ENCODE measurements at regions of chr1 and their contacts with region 1.

Region 1: GRCh38 chr1:205812878-205813754 is at the start of gene SLC41A1:
- DNase-seq: peak; percentile 89 to 97
- H3K4me3 ChIP-seq: peak within 1 kb of the TSS; percentile 94
- H3K27ac ChIP-seq: peak within 1 kb of the TSS; percentile 94 to 96
- H3K4me1 ChIP-seq: peaks cover 5 to 32% of the 10 kb centered on the region in 2 donors
- H3K27me3 ChIP-seq: no peaks in the 10 kb centered on the region
- CTCF ChIP-seq: no peak
- total RNA-seq, gene SLC41A1: 28.8 TPM

Region 2: DNA sequence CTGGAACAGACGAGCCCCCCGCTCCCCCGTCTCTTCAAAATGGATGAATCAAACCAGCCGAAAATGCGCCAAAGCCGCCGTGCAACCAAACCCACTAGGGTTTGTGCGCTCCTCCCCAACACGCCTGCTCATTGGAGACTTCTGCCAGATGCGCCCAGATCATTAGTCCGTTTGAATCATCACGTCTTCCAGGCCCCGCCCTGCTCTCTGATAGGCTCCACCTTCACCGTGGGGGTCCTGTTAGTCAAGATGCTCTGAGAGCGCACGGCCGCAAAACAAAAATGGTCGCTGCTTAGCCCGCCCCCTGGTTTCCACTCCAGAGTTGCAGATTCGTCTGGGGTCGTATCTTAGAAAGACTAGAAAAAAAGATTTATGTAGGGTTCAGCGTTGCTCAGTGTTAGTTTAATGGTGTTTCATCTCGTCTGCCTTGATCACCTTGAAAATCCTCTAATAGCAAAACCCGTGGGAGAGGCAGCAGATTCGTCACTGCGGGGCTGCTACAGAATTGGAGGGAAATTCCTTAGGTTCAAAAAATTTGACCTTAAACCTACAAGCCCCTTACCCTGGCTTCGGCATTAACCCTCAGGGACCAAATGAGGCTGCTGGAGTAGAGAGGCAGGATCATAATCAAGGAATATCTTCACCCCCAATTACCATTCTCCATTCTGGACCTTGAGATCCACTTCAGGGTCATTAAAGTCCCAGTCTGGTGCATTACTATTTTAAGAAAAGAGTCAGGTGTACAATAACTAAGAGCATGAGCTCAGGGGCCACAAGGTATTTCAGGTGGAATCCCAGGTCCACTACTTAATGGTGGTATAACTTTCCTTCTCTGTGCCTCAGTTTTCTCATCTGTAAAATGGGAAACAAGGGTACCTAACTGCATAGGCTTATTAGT is 62.7 kb before region 1 on chr1 and contains the start of gene NUCKS1:
- intact Hi-C with region 1: loop called (anchors 1 kb)
- DNase-seq: peak; percentile 98 to 100
- H3K4me3 ChIP-seq: peak within 1 kb of the TSS; percentile 88 to 92
- H3K27ac ChIP-seq: peak within 1 kb of the TSS; percentile 99
- H3K4me1 ChIP-seq: peaks cover 0 to 23% of the 10 kb centered on the region in 2 donors
- H3K27me3 ChIP-seq: no peaks in the 10 kb centered on the region
- CTCF ChIP-seq: peak in 1 of 3 experiments; percentile 29
- total RNA-seq, gene NUCKS1: 42.1 TPM

Region 3: GRCh38 chr1:205775015-205775716 is 38.0 kb before region 1 on chr1 and contains the start of gene RAB29:
- intact Hi-C with region 1: loop called (anchors 1 kb)
- DNase-seq: peak; percentile 58 to 93
- H3K4me3 ChIP-seq: peak within 1 kb of the TSS; percentile 77 to 93
- H3K27ac ChIP-seq: peak within 1 kb of the TSS; percentile 82 to 90
- H3K4me1 ChIP-seq: peaks cover 5 to 11% of the 10 kb centered on the region in 2 donors
- H3K27me3 ChIP-seq: no peaks in the 10 kb centered on the region
- CTCF ChIP-seq: no peak
- total RNA-seq, gene RAB29: 18.0 TPM

Region 4: GRCh38 chr1:205849619-205850355 is 36.7 kb after region 1 on chr1 and contains the start of gene PM20D1:
- intact Hi-C with region 1: loop called (anchors 2 kb)
- DNase-seq: peak; percentile 77 to 91
- H3K4me3 ChIP-seq: peak within 1 kb of the TSS; percentile 48 to 64
- H3K27ac ChIP-seq: no peak within 1 kb of the TSS
- H3K4me1 ChIP-seq: no peaks in the 10 kb centered on the region
- H3K27me3 ChIP-seq: no peaks in the 10 kb centered on the region
- CTCF ChIP-seq: no peak
- total RNA-seq, gene PM20D1: not detected

Region 5: GRCh38 chr1:205913451-205914155 is 100.5 kb after region 1 on chr1:
- intact Hi-C with region 1: loop called (anchors 2 kb)
- DNase-seq: peak in 1 of 2 donors; percentile 88
- H3K4me3 ChIP-seq: no peak overlapping the region
- H3K27ac ChIP-seq: peak overlapping the region; percentile 78 to 81
- H3K4me1 ChIP-seq: peaks cover 30 to 50% of the 10 kb centered on the region in 2 donors
- H3K27me3 ChIP-seq: no peaks in the 10 kb centered on the region
- CTCF ChIP-seq: no peak

Region 6: DNA sequence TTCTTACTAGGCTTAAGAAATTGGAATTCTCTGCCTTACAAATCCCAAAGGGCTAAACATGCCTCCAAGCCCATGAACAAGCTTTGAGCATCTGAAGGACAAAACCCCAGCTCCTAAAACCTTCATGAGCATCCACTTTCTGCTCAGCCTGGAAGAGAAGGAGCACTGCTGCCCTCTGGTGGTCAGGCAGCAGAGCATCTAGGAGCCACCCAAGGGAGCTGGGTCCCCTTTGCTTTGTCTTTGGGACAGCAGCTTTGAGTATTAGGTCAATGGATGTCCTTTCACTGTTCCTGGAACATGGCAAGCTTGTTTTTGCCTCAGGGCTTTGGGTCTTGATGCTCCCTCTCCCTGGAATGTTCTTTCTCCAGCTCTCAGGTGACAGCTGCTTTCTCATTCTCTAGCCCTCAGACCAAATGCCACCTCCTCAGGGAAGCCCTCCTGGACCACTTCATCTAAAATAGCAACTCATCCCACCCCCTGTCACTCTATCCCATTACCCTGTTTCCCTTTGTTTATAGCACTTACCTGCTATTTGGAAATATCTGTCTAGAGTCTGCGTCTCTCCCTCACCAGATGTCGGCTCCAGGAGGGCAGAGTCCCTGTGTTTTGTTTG is 164.4 kb after region 1 on chr1:
- intact Hi-C with region 1: loop called (anchors 5 kb)
- DNase-seq: peak in 1 of 2 donors; percentile 75
- H3K4me3 ChIP-seq: no peak overlapping the region
- H3K27ac ChIP-seq: no peak overlapping the region
- H3K4me1 ChIP-seq: peaks cover 0 to 7% of the 10 kb centered on the region in 2 donors
- H3K27me3 ChIP-seq: no peaks in the 10 kb centered on the region
- CTCF ChIP-seq: peak; percentile 90 to 97 (median 93)

Region 7: GRCh38 chr1:206106328-206107167 is 293.4 kb after region 1 on chr1:
- intact Hi-C with region 1: loop called (anchors 5 kb)
- DNase-seq: peak in 1 of 2 donors; percentile 91
- H3K4me3 ChIP-seq: no peak overlapping the region
- H3K27ac ChIP-seq: peak overlapping the region; percentile 10 to 33
- H3K4me1 ChIP-seq: peaks cover 0 to 3% of the 10 kb centered on the region in 2 donors
- H3K27me3 ChIP-seq: no peaks in the 10 kb centered on the region
- CTCF ChIP-seq: peak; percentile 78 to 89 (median 83)

Measured in ascending aorta (tissue), 2 donors.